ENCODE measurements at regions of chr10 and their contacts with region 1.

Region 1: DNA sequence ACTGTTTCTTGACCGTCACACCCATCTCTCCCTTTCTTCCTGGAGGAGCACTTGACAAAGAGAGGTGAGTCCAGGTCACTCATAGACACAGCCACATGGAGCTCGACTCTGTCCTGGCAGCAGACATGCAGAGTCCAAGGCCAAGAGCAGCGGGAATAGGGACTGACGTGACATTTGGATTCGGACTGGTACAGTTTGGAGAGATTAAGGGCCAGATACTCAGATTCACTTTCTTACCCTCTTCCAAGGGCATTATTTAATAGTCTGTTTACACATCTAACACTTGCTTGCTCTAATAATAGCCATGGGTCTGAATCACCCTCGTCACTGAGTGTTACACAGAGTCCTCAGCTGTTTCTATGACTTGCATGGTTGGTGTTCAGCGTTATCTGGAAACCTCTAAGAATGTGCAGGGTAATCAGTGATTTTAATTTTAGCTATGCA is 39.2 kb upstream of the OTUD1 start:
- DNase-seq: no peak
- ATAC-seq: no peak
- H3K4me3 ChIP-seq: no peak overlapping the region
- H3K4me3 Mint-ChIP-seq: no peak overlapping the region
- H3K27ac ChIP-seq: no peak overlapping the region
- H3K27ac Mint-ChIP-seq: no peak overlapping the region
- H3K4me1 ChIP-seq: no peaks in the 10 kb centered on the region
- H3K4me1 Mint-ChIP-seq: no peaks in the 10 kb centered on the region
- H3K27me3 ChIP-seq: no peaks in the 10 kb centered on the region
- H3K27me3 Mint-ChIP-seq: peaks cover 0 to 4% (median 0%) of the 10 kb centered on the region in 5 donors

Region 2: DNA sequence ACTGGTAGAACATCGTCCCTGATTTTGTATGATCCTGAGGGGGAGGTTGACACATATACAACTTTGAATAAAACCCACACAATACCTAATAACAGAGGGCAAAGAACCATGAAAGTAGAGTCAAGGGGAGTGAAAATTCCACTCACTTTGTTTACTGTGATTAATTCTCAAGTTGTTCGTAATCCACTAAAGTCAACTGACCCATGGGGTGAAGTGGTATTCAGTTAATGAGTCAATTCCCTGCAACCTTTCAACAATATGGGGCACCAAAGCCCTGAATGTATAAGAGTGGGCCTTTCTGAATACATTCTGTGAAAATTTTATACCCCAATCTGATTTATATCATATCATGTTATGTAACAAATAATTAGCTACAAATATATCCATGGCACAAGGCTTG is 16.1 kb before region 1 on chr10:
- CTCF ChIA-PET with region 1: no interaction called
- POLR2A ChIA-PET with region 1: no interaction called
- intact Hi-C with region 1: loop called in 1 of 2 experiments (anchors 2 kb)
- DNase-seq: no peak
- ATAC-seq: no peak
- H3K4me3 ChIP-seq: no peak overlapping the region
- H3K4me3 Mint-ChIP-seq: no peak overlapping the region
- H3K27ac ChIP-seq: no peak overlapping the region
- H3K27ac Mint-ChIP-seq: no peak overlapping the region
- H3K4me1 ChIP-seq: no peaks in the 10 kb centered on the region
- H3K4me1 Mint-ChIP-seq: no peaks in the 10 kb centered on the region
- H3K27me3 ChIP-seq: no peaks in the 10 kb centered on the region
- H3K27me3 Mint-ChIP-seq: peaks cover 0 to 4% (median 0%) of the 10 kb centered on the region in 5 donors

Region 3: GRCh38 chr10:23413629-23414089 is 13.9 kb after region 1 on chr10:
- CTCF ChIA-PET with region 1: no interaction called
- POLR2A ChIA-PET with region 1: no interaction called
- intact Hi-C with region 1: no loop called
- DNase-seq: no peak
- ATAC-seq: peak; percentile 70
- H3K4me3 ChIP-seq: no peak overlapping the region
- H3K4me3 Mint-ChIP-seq: no peak overlapping the region
- H3K27ac ChIP-seq: no peak overlapping the region
- H3K27ac Mint-ChIP-seq: no peak overlapping the region
- H3K4me1 ChIP-seq: no peaks in the 10 kb centered on the region
- H3K4me1 Mint-ChIP-seq: peaks cover 0 to 8% (median 0%) of the 10 kb centered on the region in 7 donors
- H3K27me3 ChIP-seq: no peaks in the 10 kb centered on the region
- H3K27me3 Mint-ChIP-seq: peaks cover 0 to 11% (median 0%) of the 10 kb centered on the region in 5 donors

Measured in naive thymus-derived CD4-positive, alpha-beta T cell (primary cell).